ENCODE measurements at regions of chr2 and their contacts with region 1.

Region 1: DNA sequence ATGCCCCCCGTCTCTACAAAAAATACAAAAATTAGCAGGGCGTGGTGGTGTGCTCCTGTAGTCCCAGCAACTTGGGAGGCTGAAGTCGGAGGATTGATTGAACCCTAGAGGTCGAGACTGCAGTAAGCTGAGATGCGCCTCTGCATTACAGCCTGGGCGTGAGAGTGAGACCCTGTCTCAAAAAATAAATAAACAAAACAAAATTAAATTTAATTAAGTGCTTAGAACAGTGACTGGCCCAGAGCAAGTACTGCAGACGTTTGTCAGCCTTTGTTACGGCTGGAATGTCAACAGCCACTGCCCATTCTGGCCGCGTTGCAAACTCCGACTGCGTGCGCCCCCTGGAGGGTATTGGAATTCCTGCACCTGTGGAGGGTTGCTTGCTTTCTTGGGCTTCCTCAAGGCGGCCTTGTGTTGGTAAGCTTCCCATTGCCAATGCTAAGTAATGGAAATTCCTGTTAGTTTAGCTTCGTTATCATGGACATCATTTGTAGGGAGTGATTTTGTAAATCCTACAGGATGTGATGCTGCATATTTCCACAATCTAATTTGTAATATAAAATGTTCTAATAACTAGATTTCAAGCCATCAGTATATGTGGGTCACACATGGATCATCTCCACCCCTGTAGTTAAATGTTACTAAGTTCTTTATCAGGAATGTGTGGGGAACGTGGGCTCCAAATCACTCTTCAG is 15.9 kb upstream of the ATP6V1B1 start:
- DNase-seq: peak; percentile 80
- H3K4me3 Mint-ChIP-seq: no peak overlapping the region
- H3K27ac Mint-ChIP-seq: no peak overlapping the region
- H3K4me1 Mint-ChIP-seq: no peaks in the 10 kb centered on the region
- H3K27me3 Mint-ChIP-seq: peaks cover 30% of the 10 kb centered on the region

Region 2: DNA sequence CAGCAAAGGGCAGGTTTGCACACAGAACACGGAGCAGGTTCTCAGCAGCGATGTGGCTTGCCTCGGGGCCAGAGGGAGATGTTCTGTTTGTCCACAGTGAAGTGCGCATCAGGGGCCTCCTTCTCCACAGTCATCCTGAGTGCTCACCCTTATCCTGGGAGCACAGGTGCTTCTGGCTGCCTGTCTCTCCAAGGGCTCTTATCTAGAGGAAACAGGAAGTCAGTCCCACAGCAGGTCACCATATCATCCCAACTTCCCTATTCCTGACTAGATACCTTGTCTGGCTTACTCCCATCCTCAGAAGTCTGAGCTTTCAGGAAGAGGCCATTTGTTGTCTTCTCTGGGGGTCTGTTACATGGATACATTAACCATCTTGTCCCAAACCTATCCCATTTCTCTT is 84.2 kb before region 1 on chr2 and contains the start of gene CD207:
- CTCF ChIA-PET with region 1: no interaction called
- DNase-seq: no peak
- H3K4me3 Mint-ChIP-seq: no peak within 1 kb of the TSS
- H3K27ac Mint-ChIP-seq: no peak within 1 kb of the TSS
- H3K4me1 Mint-ChIP-seq: no peaks in the 10 kb centered on the region
- H3K27me3 Mint-ChIP-seq: peaks cover 53% of the 10 kb centered on the region

Region 3: DNA sequence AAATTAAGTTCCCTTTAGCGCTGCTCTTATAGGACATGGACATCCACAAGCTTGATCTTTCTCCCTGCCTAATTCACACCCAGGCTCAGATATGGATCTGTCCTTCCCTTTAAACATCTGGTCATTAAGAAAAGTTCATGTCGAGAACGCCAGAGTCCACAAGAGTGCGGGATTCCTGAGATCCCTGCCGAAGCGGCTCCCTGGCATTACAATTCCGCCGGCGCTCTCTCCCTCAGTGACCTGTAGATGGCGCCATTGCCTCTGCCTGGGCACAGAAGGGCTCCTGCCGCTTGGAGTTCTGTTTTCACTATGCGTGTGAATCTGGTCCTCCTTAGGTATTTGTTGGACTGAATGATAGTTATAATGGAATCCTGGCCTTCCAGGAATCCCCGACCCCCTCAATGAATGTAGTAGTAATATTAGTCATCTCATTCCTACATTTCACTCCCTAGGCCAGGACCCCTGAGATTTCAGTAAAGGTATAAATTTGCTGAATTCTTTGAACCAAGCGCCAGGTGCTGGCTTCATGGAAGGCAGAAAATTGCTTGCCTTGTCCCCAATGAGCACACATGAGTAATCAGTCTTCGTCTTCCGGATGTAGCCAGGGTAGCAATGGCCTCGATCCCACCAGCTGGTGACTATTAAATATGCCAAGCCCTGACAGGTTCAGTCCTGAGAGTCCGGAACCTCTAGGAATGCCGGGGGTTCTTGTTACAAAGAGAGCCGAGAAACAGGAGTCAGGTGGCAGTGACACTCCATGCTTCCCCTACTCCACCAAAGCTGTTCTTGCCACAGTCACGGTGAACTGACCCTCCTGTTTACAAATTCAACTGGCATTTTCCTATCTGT is 57.8 kb before region 1 on chr2:
- CTCF ChIA-PET with region 1: interaction called, 28 read pairs
- DNase-seq: peak; percentile 79
- H3K4me3 Mint-ChIP-seq: no peak overlapping the region
- H3K27ac Mint-ChIP-seq: no peak overlapping the region
- H3K4me1 Mint-ChIP-seq: no peaks in the 10 kb centered on the region
- H3K27me3 Mint-ChIP-seq: peaks cover 55% of the 10 kb centered on the region

Region 4: GRCh38 chr2:70891572-70892357 is 28.1 kb before region 1 on chr2:
- CTCF ChIA-PET with region 1: interaction called, 11 read pairs
- DNase-seq: no peak
- H3K4me3 Mint-ChIP-seq: no peak overlapping the region
- H3K27ac Mint-ChIP-seq: no peak overlapping the region
- H3K4me1 Mint-ChIP-seq: peaks cover 26% of the 10 kb centered on the region
- H3K27me3 Mint-ChIP-seq: peaks cover 100% of the 10 kb centered on the region